A673 (cell line): ENCODE measurements at regions of chr1 and their contacts with region 1.

Region 1: GRCh38 chr1:234114648-234115307 is 210.3 kb downstream of the SLC35F3 start:
- DNase-seq: peak; percentile 79
- H3K4me3 ChIP-seq: peak overlapping the region; percentile 23
- H3K27ac ChIP-seq: no peak overlapping the region
- H3K4me1 ChIP-seq: peaks cover 12% of the 10 kb centered on the region
- H3K27me3 ChIP-seq: no peaks in the 10 kb centered on the region
- CTCF ChIP-seq: peak; percentile 81

Region 2: DNA sequence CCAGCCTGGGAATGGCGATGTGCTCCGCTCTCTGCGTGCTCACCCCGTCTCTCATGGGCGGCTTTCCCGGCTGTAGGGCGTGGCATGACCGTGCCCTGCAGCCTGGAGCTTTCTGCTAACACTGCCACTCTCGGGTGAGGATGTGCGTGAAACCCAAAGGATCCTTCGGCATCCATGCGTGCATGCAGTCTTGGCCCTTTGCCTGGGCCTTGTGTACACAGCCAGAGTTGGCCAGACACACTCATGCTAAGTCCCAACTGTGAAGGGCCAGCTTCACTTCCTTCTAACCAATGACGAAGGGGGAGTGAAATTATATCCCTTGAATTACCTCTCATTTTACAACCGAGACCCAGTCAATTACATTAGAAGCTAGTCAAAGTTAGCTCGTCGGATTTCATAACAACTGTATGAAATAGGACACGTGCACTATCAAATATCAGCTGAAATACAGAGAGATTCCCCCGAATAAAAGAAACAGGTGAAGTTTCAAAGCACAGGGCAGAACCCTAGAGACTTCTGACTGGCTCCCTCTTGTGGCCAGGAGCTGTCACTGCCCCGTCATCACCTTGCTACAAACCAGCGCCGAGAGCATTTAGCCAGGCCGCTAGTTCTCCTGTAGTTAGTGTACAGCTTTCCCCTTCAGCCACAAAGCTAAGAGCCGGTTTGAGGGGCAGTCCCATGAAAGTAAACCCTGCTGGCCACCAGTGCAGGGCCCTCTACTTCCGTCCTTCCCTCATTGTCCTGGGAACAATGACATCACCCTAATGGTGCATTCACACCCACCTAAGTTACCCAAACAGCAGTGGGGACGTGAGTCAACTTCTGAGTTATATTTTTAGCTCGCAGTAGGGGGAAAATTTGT is 195.1 kb after region 1 on chr1:
- CTCF ChIA-PET with region 1: interaction called, 3 read pairs
- POLR2A ChIA-PET with region 1: no interaction called
- intact Hi-C with region 1: loop called (anchors 2 kb)
- DNase-seq: peak; percentile 69
- H3K4me3 ChIP-seq: no peak overlapping the region
- H3K27ac ChIP-seq: peak overlapping the region; percentile 51
- H3K4me1 ChIP-seq: peaks cover 23% of the 10 kb centered on the region
- H3K27me3 ChIP-seq: no peaks in the 10 kb centered on the region
- CTCF ChIP-seq: peak; percentile 98

Region 3: GRCh38 chr1:234478481-234479309 is 363.9 kb after region 1 on chr1 and contains the start of gene TARBP1:
- CTCF ChIA-PET with region 1: no interaction called
- POLR2A ChIA-PET with region 1: no interaction called
- intact Hi-C with region 1: loop called (anchors 1 kb)
- DNase-seq: peak; percentile 91
- H3K4me3 ChIP-seq: peak within 1 kb of the TSS; percentile 61
- H3K27ac ChIP-seq: peak within 1 kb of the TSS; percentile 82
- H3K4me1 ChIP-seq: peaks cover 19% of the 10 kb centered on the region
- H3K27me3 ChIP-seq: peaks cover 9% of the 10 kb centered on the region
- CTCF ChIP-seq: no peak
- total RNA-seq, gene TARBP1: 28.0 and 31.9 TPM in 2 replicates

Region 4: GRCh38 chr1:234599617-234600417 is 485.0 kb after region 1 on chr1:
- CTCF ChIA-PET with region 1: no interaction called
- POLR2A ChIA-PET with region 1: interaction called, 3 read pairs
- intact Hi-C with region 1: loop called (anchors 10 kb)
- DNase-seq: peak; percentile 76
- H3K4me3 ChIP-seq: peak overlapping the region; percentile 54
- H3K27ac ChIP-seq: peak overlapping the region; percentile 86
- H3K4me1 ChIP-seq: peaks cover 57% of the 10 kb centered on the region
- H3K27me3 ChIP-seq: no peaks in the 10 kb centered on the region
- CTCF ChIP-seq: no peak

Region 5: GRCh38 chr1:235093696-235094592 is 979.2 kb after region 1 on chr1:
- CTCF ChIA-PET with region 1: no interaction called
- POLR2A ChIA-PET with region 1: no interaction called
- intact Hi-C with region 1: loop called (anchors 5 kb)
- DNase-seq: peak; percentile 77
- H3K4me3 ChIP-seq: no peak overlapping the region
- H3K27ac ChIP-seq: no peak overlapping the region
- H3K4me1 ChIP-seq: no peaks in the 10 kb centered on the region
- H3K27me3 ChIP-seq: no peaks in the 10 kb centered on the region
- CTCF ChIP-seq: peak; percentile 79

Region 6: GRCh38 chr1:235415008-235415904 is 1300.5 kb after region 1 on chr1:
- CTCF ChIA-PET with region 1: no interaction called
- POLR2A ChIA-PET with region 1: no interaction called
- intact Hi-C with region 1: loop called (anchors 10 kb)
- DNase-seq: peak; percentile 64
- H3K4me3 ChIP-seq: no peak overlapping the region
- H3K27ac ChIP-seq: no peak overlapping the region
- H3K4me1 ChIP-seq: no peaks in the 10 kb centered on the region
- H3K27me3 ChIP-seq: no peaks in the 10 kb centered on the region
- CTCF ChIP-seq: peak; percentile 58

Region 7: GRCh38 chr1:235783148-235783776 is 1668.5 kb after region 1 on chr1:
- CTCF ChIA-PET with region 1: no interaction called
- POLR2A ChIA-PET with region 1: no interaction called
- intact Hi-C with region 1: loop called (anchors 10 kb)
- DNase-seq: peak; percentile 42
- H3K4me3 ChIP-seq: no peak overlapping the region
- H3K27ac ChIP-seq: no peak overlapping the region
- H3K4me1 ChIP-seq: no peaks in the 10 kb centered on the region
- H3K27me3 ChIP-seq: no peaks in the 10 kb centered on the region
- CTCF ChIP-seq: peak; percentile 43; the same call in 1 of the 2 replicates